ENCODE measurements at regions of chr3 and their contacts with region 1.

Region 1: GRCh38 chr3:111859974-111860859 is 1.2 kb downstream of the PHLDB2 start:
- DNase-seq: peak; percentile 93
- H3K4me3 Mint-ChIP-seq: peak overlapping the region; percentile 98
- H3K27ac Mint-ChIP-seq: peak overlapping the region; percentile 94
- H3K4me1 Mint-ChIP-seq: peaks cover 50% of the 10 kb centered on the region
- H3K27me3 Mint-ChIP-seq: no peaks in the 10 kb centered on the region
- CTCF ChIP-seq: peak; percentile 61

Region 2: GRCh38 chr3:111668912-111669488 is 191.2 kb before region 1 on chr3:
- CTCF ChIA-PET with region 1: interaction called, 6 read pairs
- POLR2A ChIA-PET with region 1: interaction called, 4 read pairs
- intact Hi-C with region 1: loop called (anchors 1 kb)
- DNase-seq: peak; percentile 61
- H3K4me3 Mint-ChIP-seq: no peak overlapping the region
- H3K27ac Mint-ChIP-seq: peak overlapping the region; percentile 10
- H3K4me1 Mint-ChIP-seq: peaks cover 33% of the 10 kb centered on the region
- H3K27me3 Mint-ChIP-seq: no peaks in the 10 kb centered on the region
- CTCF ChIP-seq: peak; percentile 71

Region 3: DNA sequence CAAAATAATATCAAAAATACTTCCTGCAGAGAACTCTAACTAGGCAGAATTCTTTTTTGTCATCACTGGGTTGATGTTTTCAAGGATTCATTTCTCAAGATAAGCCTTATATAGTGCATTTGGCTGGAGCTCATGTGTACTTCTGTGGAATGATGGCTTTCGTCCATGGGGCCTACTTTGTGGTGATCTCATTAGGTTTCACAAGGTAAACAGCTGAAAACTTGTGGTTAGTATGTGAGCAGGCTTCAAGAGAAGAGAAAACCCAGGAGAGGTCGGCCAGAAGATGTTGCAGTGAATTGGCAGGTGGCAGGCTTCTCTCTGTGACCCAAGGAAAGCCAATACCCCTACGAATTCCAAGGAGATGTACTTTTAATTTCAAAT is 122.5 kb before region 1 on chr3:
- CTCF ChIA-PET with region 1: interaction called, 69 read pairs
- POLR2A ChIA-PET with region 1: interaction called, 151 read pairs
- intact Hi-C with region 1: loop called (anchors 1 kb)
- DNase-seq: peak; percentile 89
- H3K4me3 Mint-ChIP-seq: no peak overlapping the region
- H3K27ac Mint-ChIP-seq: peak overlapping the region; percentile 58
- H3K4me1 Mint-ChIP-seq: peaks cover 40% of the 10 kb centered on the region
- H3K27me3 Mint-ChIP-seq: no peaks in the 10 kb centered on the region
- CTCF ChIP-seq: no peak

Region 4: DNA sequence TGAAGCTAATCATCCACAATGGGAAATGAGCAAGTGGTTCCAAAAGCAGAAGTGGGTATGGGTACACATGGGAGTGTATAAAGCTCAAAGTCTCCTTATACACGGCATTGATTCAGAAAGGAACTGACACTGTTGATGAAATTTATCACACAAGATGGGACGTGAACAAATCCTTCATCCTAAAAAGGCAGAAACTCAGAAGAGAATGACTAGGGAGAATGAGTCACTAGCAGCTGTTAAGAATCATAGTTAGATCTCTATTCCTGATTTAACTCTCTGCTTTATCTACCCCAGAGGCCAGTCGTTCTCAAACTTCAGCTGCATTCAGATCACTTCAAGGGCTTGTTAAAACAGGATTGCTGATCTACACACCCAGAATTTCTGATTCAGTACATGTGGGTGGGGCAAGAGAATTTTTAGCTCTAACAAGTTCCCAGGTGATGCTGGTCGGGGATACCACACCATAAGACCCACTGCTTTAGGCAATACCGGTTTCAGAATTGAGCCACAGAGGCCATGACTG is 98.8 kb before region 1 on chr3:
- CTCF ChIA-PET with region 1: interaction called, 20 read pairs
- POLR2A ChIA-PET with region 1: interaction called, 81 read pairs
- intact Hi-C with region 1: no loop called
- DNase-seq: peak; percentile 73
- H3K4me3 Mint-ChIP-seq: peak overlapping the region; percentile 45
- H3K27ac Mint-ChIP-seq: peak overlapping the region; percentile 96
- H3K4me1 Mint-ChIP-seq: peaks cover 30% of the 10 kb centered on the region
- H3K27me3 Mint-ChIP-seq: no peaks in the 10 kb centered on the region
- CTCF ChIP-seq: no peak

Region 5: GRCh38 chr3:111810909-111811308 is 49.3 kb before region 1 on chr3:
- CTCF ChIA-PET with region 1: interaction called, 60 read pairs
- POLR2A ChIA-PET with region 1: interaction called, 245 read pairs
- intact Hi-C with region 1: no loop called
- DNase-seq: peak; percentile 86
- H3K4me3 Mint-ChIP-seq: no peak overlapping the region
- H3K27ac Mint-ChIP-seq: peak overlapping the region; percentile 80
- H3K4me1 Mint-ChIP-seq: peaks cover 43% of the 10 kb centered on the region
- H3K27me3 Mint-ChIP-seq: no peaks in the 10 kb centered on the region
- CTCF ChIP-seq: no peak

Region 6: DNA sequence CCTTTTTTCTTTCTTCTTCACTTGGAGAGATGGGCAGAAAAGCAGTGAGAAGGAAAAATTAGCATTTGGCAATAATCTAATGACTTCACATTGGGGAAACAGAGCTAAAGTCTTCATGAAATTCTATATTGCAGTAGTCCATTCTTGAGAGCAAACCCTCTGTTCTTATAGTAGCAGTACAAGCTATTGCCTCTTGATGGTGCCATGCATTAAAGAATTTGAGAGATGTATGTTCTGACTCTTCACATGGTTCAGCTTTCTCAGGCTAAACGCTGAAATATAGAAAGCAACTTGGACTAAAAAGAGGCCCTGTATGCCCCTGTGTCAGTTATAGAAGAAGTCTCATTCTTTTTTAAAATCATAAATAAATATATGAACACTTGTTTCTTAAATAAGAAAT is 34.9 kb after region 1 on chr3:
- CTCF ChIA-PET with region 1: interaction called, 10 read pairs
- POLR2A ChIA-PET with region 1: interaction called, 7 read pairs
- intact Hi-C with region 1: no loop called
- DNase-seq: peak; percentile 63
- H3K4me3 Mint-ChIP-seq: no peak overlapping the region
- H3K27ac Mint-ChIP-seq: peak overlapping the region; percentile 69
- H3K4me1 Mint-ChIP-seq: peaks cover 14% of the 10 kb centered on the region
- H3K27me3 Mint-ChIP-seq: no peaks in the 10 kb centered on the region
- CTCF ChIP-seq: peak; percentile 46

Region 7: GRCh38 chr3:111978493-111979433 is 118.5 kb after region 1 on chr3 and contains the start of gene ABHD10:
- CTCF ChIA-PET with region 1: interaction called, 6 read pairs
- POLR2A ChIA-PET with region 1: interaction called, 21 read pairs
- intact Hi-C with region 1: no loop called
- DNase-seq: peak; percentile 98
- H3K4me3 Mint-ChIP-seq: peak within 1 kb of the TSS; percentile 85
- H3K27ac Mint-ChIP-seq: peak within 1 kb of the TSS; percentile 66
- H3K4me1 Mint-ChIP-seq: peaks cover 5% of the 10 kb centered on the region
- H3K27me3 Mint-ChIP-seq: no peaks in the 10 kb centered on the region
- CTCF ChIP-seq: no peak
- total RNA-seq, gene ABHD10: 26.0 and 34.1 TPM in 2 replicates

Region 8: DNA sequence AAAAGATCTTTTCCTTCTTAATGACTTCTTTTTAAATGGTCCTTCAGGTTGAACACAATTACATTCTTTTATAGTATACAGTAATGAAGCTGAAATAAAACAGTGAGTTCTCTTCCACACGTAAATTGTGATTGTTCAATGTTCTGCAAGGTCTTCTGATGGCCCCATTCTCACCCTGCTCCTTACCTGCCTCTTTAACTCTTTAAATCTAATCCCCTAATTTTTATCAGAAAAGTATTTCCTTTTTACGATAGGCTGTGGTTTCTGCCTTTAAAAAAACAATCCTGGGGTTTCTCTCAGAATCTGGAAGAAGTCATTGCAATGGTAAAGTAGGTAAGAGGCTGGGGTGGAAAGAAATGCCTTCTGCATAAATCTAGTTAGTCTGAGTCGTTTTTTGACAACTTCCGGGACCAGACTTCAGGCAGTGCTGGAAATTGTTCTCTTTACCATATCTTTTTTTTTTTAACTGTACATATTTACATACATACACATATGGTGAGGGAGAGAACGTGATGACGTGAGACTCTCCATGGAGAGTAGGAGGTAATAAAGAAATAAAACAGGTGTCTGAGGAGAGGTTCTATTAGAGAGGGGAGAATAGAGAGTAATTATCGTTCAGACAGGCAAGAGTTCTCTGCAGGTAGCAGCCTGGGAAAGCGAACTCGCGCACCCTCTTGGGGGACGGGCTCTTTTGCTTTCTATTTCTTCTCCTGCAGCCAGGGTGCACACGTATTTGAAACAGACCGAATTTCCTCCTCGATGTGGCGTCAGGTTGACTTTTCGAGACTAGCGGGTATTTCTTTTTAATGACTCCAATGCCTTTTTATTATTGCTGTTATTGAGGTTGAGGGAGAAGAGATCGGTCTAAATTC is 1671.8 kb after region 1 on chr3 and contains the start of gene SIDT1:
- CTCF ChIA-PET with region 1: no interaction called
- POLR2A ChIA-PET with region 1: no interaction called
- intact Hi-C with region 1: no loop called
- DNase-seq: peak; percentile 35
- H3K4me3 Mint-ChIP-seq: peak within 1 kb of the TSS; percentile 83
- H3K27ac Mint-ChIP-seq: peak within 1 kb of the TSS; percentile 11
- H3K4me1 Mint-ChIP-seq: peaks cover 20% of the 10 kb centered on the region
- H3K27me3 Mint-ChIP-seq: peaks cover 69% of the 10 kb centered on the region
- CTCF ChIP-seq: no peak
- total RNA-seq, gene SIDT1: 0.22 and 0.28 TPM in 2 replicates